ENCODE measurements at regions of chr4 and their contacts with region 1.

Region 1: DNA sequence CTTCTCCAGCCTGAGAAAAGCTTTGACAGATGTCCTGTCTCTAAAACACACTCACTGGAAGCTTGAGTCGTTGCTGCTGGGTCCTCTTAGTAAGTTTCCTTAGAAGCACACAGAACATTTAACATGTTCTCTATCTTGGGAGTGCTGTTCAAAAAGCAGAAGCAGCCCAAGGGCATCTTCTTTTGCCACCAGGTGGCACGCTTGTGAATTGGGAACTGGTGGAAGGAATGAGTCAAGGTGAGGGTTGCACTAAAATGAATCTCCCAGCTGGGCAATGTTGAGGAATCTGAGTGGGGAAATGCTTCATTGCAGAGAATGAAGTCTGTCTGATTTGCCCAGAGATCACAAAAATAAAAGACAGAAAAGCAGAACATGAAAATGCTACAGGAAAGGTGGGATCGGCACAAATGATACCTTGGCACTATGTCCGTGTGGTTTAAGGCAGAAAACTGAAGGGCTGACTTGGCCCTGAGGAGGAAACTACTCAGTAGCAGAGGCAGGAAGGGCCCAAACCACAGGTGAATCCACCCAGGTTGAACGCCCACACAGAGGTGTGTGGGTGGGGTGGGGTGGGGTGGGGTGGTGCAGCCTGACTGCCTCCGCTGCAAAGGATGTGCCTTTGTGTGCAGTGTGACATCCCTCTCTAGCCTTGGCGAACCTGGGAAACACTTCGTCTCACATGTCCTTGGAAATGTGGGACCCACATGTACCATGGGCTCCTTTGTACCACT is 26.0 kb downstream of the KIT start:
- DNase-seq: peak; percentile 37
- H3K4me3 ChIP-seq: no peak overlapping the region
- H3K27ac ChIP-seq: no peak overlapping the region
- H3K4me1 ChIP-seq: no peaks in the 10 kb centered on the region
- CTCF ChIP-seq: peak; percentile 76

Region 2: GRCh38 chr4:54961357-54961975 is 277.7 kb after region 1 on chr4:
- CTCF ChIA-PET with region 1: no interaction called
- POLR2A ChIA-PET with region 1: no interaction called
- intact Hi-C with region 1: loop called (anchors 2 kb)
- DNase-seq: peak; percentile 34
- H3K4me3 ChIP-seq: no peak overlapping the region
- H3K27ac ChIP-seq: no peak overlapping the region
- H3K4me1 ChIP-seq: no peaks in the 10 kb centered on the region
- CTCF ChIP-seq: peak; percentile 79